ENCODE measurements at regions of chr10 and their contacts with region 1.

Region 1: DNA sequence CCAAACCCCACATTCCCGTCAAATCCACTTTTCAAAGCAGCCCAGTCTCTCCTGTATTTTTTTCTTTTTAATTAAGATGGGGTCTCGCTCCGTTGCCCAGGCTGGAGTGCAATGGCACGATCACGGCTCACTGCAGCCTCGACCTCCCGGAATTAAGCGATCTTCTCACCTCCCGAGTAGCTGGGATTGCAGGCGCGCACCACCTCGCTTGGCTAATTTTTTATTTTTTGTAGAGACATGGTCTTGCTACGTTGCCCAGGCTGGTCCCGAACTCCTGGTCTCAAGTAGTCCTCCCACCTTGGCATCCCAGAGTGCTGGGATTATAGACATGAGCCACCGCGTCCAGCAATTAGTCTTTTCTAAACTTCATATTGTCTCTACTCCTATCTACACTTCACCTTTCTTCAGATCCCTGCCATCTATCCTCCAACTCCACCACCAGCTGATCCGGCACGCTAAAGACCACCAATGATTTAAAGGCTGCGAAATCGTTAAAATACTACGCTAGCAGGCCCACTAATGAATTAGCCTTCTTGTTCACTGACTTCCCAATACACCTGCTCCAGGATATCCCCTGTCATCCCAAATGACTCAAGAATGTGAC is 525 bp upstream of the CHUK start:
- DNase-seq: no peak
- H3K4me3 ChIP-seq: peak overlapping the region; percentile 92 to 97 (median 94)
- H3K27ac ChIP-seq: peak overlapping the region; percentile 77 to 88 (median 84)
- H3K4me1 ChIP-seq: peaks cover 13 to 25% (median 20%) of the 10 kb centered on the region in 4 donors
- H3K27me3 ChIP-seq: no peaks in the 10 kb centered on the region
- CTCF ChIP-seq: no peak
- EP300 ChIP-seq: no peak
- POLR2A ChIP-seq: no peak

Region 2: GRCh38 chr10:100174699-100175677 is 54.9 kb before region 1 on chr10:
- intact Hi-C with region 1: no loop called
- DNase-seq: no peak
- H3K4me3 ChIP-seq: no peak overlapping the region
- H3K27ac ChIP-seq: no peak overlapping the region
- H3K4me1 ChIP-seq: no peaks in the 10 kb centered on the region
- H3K27me3 ChIP-seq: no peaks in the 10 kb centered on the region
- CTCF ChIP-seq: no peak
- EP300 ChIP-seq: no peak
- POLR2A ChIP-seq: no peak

Region 3: DNA sequence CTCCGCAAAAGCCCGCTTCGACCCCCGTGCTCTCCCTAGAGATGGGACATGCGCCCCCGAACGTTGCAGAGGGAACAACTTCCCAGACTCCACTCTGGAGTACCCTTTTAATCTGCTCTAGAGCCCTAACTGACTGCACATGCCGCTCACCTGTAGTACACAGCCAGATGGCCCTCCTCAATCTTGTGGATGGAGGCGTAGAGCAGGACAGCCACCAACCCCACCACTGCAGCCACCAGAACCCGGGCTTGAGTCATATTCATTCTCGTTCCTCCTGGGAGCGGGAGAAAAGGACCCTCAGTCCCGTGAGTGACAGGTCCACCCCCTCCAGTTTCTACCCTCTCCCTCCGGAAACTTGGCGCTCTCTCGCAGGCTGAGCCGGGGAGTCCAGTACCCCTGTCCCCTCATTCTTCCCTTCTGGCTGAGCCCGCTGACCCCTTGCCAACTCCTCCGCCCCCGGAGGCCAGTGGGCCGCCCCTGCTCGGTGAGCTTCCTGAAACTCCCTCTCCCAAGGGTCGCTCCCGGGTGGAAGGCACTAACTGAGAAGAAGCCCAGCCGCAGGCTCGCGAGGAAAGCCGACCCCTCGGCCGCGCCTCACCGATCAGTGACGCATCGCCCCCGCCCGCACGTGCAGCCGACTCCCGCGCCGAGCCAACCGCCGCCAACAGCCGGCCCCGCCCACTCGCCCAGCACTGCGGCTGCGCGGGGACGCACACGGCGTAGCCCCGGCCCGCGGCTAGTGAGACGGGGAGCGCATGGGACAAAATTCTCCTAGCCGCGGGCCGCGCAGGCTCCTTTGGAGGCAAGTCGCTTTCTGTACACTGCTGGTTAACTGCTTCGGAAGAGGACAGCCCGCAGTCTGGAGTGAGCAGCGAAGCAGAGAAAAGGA is 44.3 kb before region 1 on chr10 and contains the start of gene ERLIN1:
- intact Hi-C with region 1: loop called (anchors 5 kb)
- DNase-seq: peak; percentile 95
- H3K4me3 ChIP-seq: peak within 1 kb of the TSS; percentile 71 to 86 (median 84)
- H3K27ac ChIP-seq: peak within 1 kb of the TSS; percentile 82 to 87 (median 84)
- H3K4me1 ChIP-seq: peaks cover 19 to 31% (median 28%) of the 10 kb centered on the region in 4 donors
- H3K27me3 ChIP-seq: no peaks in the 10 kb centered on the region
- CTCF ChIP-seq: peak in 1 of 3 experiments; percentile 21
- EP300 ChIP-seq: no peak
- POLR2A ChIP-seq: peak; percentile 26
- total RNA-seq, gene ERLIN1: 8.3 to 14.4 (median 13.6) TPM

Region 4: DNA sequence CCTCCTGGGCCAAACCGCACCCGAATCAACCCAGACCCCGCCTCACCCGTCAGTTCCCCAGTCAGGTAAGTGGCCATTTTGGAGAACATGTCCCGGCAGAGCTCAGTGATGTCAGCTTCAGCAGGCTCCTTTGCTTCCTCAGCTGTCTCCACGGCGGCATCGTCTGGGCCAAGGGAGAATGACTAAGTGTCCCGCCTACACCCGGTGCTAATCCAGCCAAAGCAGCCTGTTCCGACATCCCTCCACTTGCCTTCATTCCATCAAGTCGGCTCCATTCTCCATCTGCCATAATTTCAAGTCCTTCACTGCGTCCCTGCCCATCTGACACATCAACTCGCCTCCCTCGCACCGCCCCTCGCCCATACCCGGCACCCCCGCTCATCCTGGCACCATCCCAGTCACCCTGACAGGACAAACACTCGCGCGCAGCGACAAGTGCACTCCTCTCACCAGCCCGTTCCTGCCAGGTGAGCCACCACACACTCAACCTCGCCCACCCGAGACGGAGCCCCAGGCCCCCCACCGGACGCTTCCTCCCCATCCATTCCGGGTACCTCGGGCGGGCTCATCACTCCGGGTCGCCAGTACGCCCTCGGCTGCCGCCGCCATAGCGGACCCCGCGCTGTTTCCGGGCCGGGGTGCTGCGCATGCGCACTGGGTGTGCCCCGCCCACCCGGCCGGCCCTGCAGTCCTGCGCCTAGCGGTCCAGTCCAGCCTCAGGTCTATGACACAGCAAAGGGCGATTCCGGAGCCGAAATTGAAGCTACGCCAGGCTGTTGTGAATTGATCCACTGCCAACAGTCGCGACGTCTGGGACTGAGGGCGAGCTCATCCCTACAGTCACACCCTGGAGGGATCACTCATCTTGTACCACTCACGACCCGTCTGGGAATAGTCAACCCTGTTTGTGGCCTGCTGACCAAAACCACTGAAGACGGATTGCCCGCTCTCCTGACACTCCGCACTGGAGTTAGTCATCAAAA is 56.4 kb after region 1 on chr10 and contains the start of gene BLOC1S2:
- intact Hi-C with region 1: no loop called
- DNase-seq: peak; percentile 96
- H3K4me3 ChIP-seq: peak within 1 kb of the TSS; percentile 72 to 92 (median 81)
- H3K27ac ChIP-seq: peak within 1 kb of the TSS; percentile 88 to 98 (median 93)
- H3K4me1 ChIP-seq: peaks cover 25 to 50% (median 42%) of the 10 kb centered on the region in 4 donors
- H3K27me3 ChIP-seq: no peaks in the 10 kb centered on the region
- CTCF ChIP-seq: peak in 2 of 3 experiments; percentile 20 to 37
- EP300 ChIP-seq: no peak
- POLR2A ChIP-seq: peak; percentile 79
- total RNA-seq, gene BLOC1S2: 11.2 to 23.4 (median 17.5) TPM

Measured in esophagus muscularis mucosa (tissue), 4 donors.